ENCODE measurements at regions of chr1 and their contacts with region 1.

Region 1: DNA sequence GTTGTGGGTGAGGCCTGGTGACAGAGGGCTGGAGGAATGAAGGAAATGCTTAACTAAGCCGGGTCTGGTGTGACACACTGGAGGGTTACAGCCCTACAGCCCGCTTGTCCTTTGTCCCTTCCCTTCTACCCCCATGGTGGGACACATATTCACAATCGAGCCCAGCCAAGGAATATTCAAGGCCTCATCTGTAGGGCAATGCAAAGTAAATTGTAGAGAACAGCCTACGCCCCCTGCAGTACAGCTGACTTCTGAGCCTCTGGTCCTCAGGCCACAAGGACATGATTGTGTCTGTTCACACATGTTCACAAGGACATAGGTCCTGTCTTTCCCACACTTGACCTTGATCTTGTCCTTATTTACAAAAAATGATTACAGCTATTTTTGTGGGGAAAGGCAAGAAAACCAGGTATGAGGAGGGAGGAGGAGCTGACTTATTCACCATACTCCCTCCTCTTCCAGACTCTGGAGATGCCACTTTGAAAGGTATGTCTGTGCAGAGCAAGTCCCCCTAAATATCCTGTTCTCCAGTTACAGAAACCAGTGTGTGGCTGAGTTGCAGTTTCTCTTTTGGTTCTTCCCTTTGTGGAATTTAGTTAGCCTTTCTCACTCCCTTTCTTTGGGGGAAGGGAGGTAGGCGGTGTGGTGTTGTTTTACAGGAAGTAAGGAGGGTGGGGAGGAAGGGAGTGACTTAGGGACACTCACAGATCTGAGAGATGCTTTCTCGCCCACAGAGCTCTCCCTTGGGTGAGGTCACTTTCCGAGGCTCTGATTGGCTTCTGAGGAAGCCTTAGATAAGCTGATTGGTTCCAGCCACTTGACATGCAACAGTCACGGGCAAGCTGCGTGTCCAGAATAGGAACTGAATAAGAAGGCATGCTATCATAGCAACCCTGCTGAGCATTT is 14.6 kb downstream of the POLR3GL start:
- DNase-seq: peak; percentile 100
- ATAC-seq: peak; percentile 95
- H3K4me3 ChIP-seq: peak overlapping the region; percentile 45; the same call in 1 of the 2 replicates
- H3K27ac ChIP-seq: peak overlapping the region; percentile 87
- H3K4me1 ChIP-seq: peaks cover 48% of the 10 kb centered on the region
- H3K27me3 ChIP-seq: no peaks in the 10 kb centered on the region
- CTCF ChIP-seq: peak; percentile 63

Region 2: GRCh38 chr1:145957443-145958319 is 21.4 kb before region 1 on chr1 and contains the start of gene LIX1L:
- CTCF ChIA-PET with region 1: interaction called, 6 read pairs
- POLR2A ChIA-PET with region 1: no interaction called
- intact Hi-C with region 1: loop called (anchors 2 kb)
- DNase-seq: peak; percentile 99
- ATAC-seq: peak; percentile 81
- H3K4me3 ChIP-seq: peak within 1 kb of the TSS; percentile 76
- H3K27ac ChIP-seq: 0 out of 2 replicates have a peak within 1 kb of the TSS, but pooled peaks have one; percentile 1
- H3K4me1 ChIP-seq: peaks cover 43% of the 10 kb centered on the region
- H3K27me3 ChIP-seq: no peaks in the 10 kb centered on the region
- CTCF ChIP-seq: no peak
- total RNA-seq, gene LIX1L: 12.5 and 13.6 TPM in 2 replicates

Region 3: GRCh38 chr1:145996433-145997015 is 17.4 kb after region 1 on chr1 and contains the start of gene TXNIP:
- CTCF ChIA-PET with region 1: no interaction called
- POLR2A ChIA-PET with region 1: interaction called, 6 read pairs
- intact Hi-C with region 1: loop called (anchors 1 kb)
- DNase-seq: peak; percentile 98
- ATAC-seq: peak; percentile 94
- H3K4me3 ChIP-seq: peak within 1 kb of the TSS; percentile 99
- H3K27ac ChIP-seq: peak within 1 kb of the TSS; percentile 66
- H3K4me1 ChIP-seq: peaks cover 46% of the 10 kb centered on the region
- H3K27me3 ChIP-seq: no peaks in the 10 kb centered on the region
- CTCF ChIP-seq: no peak
- total RNA-seq, gene TXNIP: 45.3 and 66.6 TPM in 2 replicates

Region 4: GRCh38 chr1:146012737-146013403 is 33.8 kb after region 1 on chr1:
- CTCF ChIA-PET with region 1: interaction called, 11 read pairs
- POLR2A ChIA-PET with region 1: no interaction called
- intact Hi-C with region 1: loop called (anchors 1 kb)
- DNase-seq: peak; percentile 96
- ATAC-seq: peak; percentile 79
- H3K4me3 ChIP-seq: no peak overlapping the region
- H3K27ac ChIP-seq: no peak overlapping the region
- H3K4me1 ChIP-seq: peaks cover 4% of the 10 kb centered on the region; the same call in 1 of the 2 replicates
- H3K27me3 ChIP-seq: no peaks in the 10 kb centered on the region
- CTCF ChIP-seq: peak; percentile 98

Measured in PC-3 (cell line).